ENCODE measurements at regions of chr13 and their contacts with region 1.

Region 1: DNA sequence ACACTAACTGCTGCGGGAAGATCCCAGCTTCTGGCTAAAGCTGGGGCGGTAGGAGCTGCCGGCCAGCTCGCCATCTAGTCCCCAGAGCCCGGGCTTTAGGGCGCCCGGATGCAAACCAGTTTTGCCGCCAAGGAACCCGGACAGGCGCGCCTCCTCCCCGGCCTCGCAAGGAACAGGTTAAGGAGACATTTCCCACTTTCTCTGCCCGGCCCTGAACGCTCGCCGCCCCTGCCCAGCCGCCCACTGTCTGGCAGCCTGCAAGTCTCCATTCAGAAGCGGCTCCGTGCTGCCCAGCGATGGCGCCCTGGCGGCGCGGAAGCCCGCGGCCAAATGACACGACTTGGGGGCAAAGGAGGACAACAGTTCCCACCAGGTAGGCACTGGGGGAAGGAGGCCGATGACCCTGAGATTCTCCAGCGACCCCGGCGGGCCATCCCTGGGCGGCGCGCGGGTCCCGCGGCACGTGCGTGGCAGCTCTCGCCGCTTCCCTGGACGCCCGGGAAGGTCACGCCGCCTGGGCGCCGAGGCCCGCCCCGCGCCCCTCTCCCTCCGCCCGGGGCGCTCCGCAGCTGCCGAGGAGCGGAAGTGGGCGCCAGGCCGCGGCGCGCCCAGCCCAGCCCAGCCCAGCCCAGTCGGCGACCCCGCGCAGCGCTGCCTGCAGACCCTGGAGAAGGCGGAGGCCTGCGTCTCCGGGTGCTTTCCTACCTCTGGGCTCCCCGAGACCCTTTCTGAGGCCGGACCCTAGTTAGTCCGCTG is 42.2 kb upstream of the HNRNPA1L2 start:
- H3K4me3 ChIP-seq: peak overlapping the region; percentile 64
- H3K27ac ChIP-seq: peak overlapping the region; percentile 85
- H3K4me1 ChIP-seq: no peaks in the 10 kb centered on the region
- CTCF ChIP-seq: peak; percentile 29; the same call in 1 of the 2 replicates

Region 2: DNA sequence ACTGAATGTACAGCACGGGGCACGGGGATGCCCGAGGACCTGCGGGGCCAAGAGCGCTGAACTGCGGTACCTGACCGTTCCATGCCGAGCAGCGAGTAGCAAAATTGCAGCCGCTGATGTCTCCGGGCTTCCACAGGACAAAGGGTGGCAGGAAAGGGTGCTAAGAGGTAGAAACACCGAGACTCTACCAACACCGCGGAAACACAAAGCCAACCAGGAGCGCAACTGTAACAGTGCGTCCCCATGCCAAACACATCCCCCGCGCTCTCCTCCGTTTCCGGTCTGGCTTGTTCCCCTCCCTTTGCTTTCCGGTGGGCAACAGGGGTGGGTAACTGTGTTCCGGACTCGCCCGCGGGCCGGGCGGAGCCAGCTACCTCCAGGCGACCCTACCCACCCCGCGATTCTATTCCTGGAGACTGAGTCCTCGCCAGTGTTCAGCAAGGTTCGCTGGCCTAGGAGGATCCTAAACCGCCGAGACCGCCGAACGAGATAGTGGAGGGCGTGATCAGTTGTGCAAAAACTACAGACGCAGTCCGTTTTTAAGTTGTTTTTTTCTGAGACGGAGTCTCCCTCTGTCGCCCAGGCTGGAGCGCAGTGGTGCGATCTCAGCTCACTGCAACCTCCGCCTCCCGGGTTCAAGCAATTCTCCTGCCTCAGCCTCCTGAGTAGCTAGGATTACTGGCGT is 405.7 kb before region 1 on chr13:
- CTCF ChIA-PET with region 1: no interaction called
- POLR2A ChIA-PET with region 1: no interaction called
- H3K4me3 ChIP-seq: peak overlapping the region; percentile 65
- H3K27ac ChIP-seq: peak overlapping the region; percentile 67
- H3K4me1 ChIP-seq: 0 out of 2 replicates have a peak, but pooled peaks cover 2% of the 10 kb centered on the region
- CTCF ChIP-seq: no peak

Region 3: GRCh38 chr13:52617070-52618060 is 17.3 kb after region 1 on chr13:
- CTCF ChIA-PET with region 1: no interaction called
- POLR2A ChIA-PET with region 1: interaction called, 16 read pairs
- H3K4me3 ChIP-seq: peak overlapping the region; percentile 83
- H3K27ac ChIP-seq: peak overlapping the region; percentile 21; the same call in 1 of the 2 replicates
- H3K4me1 ChIP-seq: 0 out of 2 replicates have a peak, but pooled peaks cover 2% of the 10 kb centered on the region
- CTCF ChIP-seq: no peak

Measured in HEK293 (cell line).